IMR-90 (cell line): ENCODE measurements at regions of chr20 and their contacts with region 1.

Region 1: DNA sequence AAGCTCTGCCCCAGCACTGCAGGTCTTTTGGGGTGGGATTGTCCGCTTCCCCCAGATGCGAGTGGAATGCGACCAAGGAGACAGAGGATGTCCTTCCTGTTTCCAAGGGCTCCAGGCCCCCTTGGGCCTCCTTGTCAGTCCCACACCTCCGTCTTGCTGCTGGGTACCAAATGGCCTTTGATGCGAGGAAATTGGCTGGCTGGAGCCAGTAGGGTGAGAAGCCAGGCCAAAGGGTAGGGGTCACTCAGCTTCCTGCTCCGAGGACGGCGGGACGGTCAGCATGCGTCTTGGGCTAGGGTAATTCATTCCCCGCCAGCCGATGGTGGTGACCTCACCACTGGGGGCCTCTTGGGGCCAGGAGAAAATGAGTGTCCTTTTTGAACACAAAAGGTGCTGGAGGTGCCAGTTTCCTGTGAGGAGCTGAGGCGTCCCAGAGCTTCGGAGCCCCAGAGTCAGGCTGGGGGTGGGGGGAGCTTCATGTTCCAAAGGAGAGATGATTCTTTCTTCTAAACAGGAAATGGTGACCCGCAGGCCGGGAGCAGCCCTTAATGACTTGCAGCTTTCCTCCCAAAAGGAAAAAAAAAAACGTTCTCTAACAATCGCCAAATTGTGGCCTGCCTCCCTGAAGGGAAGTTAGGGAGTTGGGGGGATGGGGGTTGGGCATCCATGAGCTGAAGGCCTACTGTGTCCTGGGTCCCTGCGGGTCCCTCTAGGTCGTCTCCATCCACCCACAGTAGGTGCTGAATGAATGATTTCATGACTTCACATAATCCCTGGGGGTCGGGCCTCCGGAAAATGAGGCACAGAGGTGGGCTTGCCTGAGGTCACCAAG is 6.7 kb downstream of the SNAI1 start:
- DNase-seq: peak; percentile 87
- ATAC-seq: peak; percentile 75
- H3K4me3 ChIP-seq: no peak overlapping the region
- H3K27ac ChIP-seq: peak overlapping the region; percentile 95
- H3K4me1 ChIP-seq: peaks cover 43% of the 10 kb centered on the region
- H3K27me3 ChIP-seq: no peaks in the 10 kb centered on the region
- CTCF ChIP-seq: no peak
- POLR2A ChIP-seq: peak; percentile 60
- RAD21 ChIP-seq: no peak

Region 2: GRCh38 chr20:49832632-49833327 is 156.7 kb before region 1 on chr20:
- CTCF ChIA-PET with region 1: no interaction called
- POLR2A ChIA-PET with region 1: no interaction called
- dilution Hi-C with region 1: no loop called
- in situ Hi-C with region 1: no loop called
- intact Hi-C with region 1: no loop called
- DNase-seq: peak; percentile 39
- ATAC-seq: peak; percentile 64
- H3K4me3 ChIP-seq: no peak overlapping the region
- H3K27ac ChIP-seq: peak overlapping the region; percentile 71; the same call in 1 of the 2 replicates
- H3K4me1 ChIP-seq: peaks cover 6% of the 10 kb centered on the region; the same call in 1 of the 2 replicates
- H3K27me3 ChIP-seq: no peaks in the 10 kb centered on the region
- CTCF ChIP-seq: no peak
- POLR2A ChIP-seq: no peak
- RAD21 ChIP-seq: no peak

Region 3: GRCh38 chr20:49865559-49865958 is 123.9 kb before region 1 on chr20:
- CTCF ChIA-PET with region 1: no interaction called
- POLR2A ChIA-PET with region 1: no interaction called
- dilution Hi-C with region 1: no loop called
- in situ Hi-C with region 1: no loop called
- intact Hi-C with region 1: no loop called
- DNase-seq: peak; percentile 24
- ATAC-seq: no peak
- H3K4me3 ChIP-seq: no peak overlapping the region
- H3K27ac ChIP-seq: no peak overlapping the region
- H3K4me1 ChIP-seq: peaks cover 2% of the 10 kb centered on the region; the same call in 1 of the 2 replicates
- H3K27me3 ChIP-seq: no peaks in the 10 kb centered on the region
- CTCF ChIP-seq: no peak
- POLR2A ChIP-seq: no peak
- RAD21 ChIP-seq: no peak

Region 4: DNA sequence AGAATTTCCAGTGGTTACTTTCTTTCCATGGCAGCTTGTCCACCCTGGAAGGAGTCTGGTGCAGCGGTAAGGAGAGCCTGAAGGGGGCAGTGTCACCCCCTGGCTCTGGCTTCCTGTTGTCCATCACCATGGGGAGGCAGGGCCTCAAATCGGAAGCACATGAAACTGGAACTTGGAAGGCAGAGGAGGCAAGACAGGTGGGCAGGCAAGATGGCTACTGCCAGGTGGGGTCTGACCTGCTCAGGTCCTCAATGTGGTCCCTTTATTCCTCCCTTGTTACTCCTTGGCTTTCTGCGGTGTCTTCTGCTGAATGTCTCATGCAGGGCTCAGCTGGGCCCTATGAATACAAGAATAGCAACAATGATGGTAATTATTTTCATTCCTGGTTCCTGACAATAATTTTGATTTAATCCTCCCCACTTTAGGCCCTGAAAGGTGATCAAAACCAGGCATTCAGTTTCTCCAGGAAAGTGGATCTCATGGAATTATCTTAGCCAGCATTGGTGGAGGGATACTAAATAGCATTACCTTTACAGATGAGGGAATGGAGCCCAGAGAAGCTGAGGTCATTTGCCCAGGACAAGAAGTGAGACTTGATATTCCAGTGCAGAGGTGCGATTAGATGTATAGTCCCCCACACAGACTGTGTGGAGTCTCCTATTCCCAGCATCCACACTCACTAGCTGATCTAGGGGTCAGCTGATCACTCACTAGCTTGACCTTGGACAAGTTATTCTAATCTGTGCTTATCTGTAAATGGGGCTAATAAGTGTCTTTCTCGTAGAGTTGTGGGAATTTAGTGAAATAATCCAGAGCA is 24.3 kb before region 1 on chr20:
- CTCF ChIA-PET with region 1: no interaction called
- POLR2A ChIA-PET with region 1: no interaction called
- dilution Hi-C with region 1: no loop called
- in situ Hi-C with region 1: no loop called
- intact Hi-C with region 1: no loop called
- DNase-seq: no peak
- ATAC-seq: peak; percentile 36; the same call in 1 of the 2 replicates
- H3K4me3 ChIP-seq: no peak overlapping the region
- H3K27ac ChIP-seq: no peak overlapping the region
- H3K4me1 ChIP-seq: peaks cover 2% of the 10 kb centered on the region; the same call in 1 of the 2 replicates
- H3K27me3 ChIP-seq: no peaks in the 10 kb centered on the region
- CTCF ChIP-seq: peak; percentile 48
- POLR2A ChIP-seq: no peak
- RAD21 ChIP-seq: peak; percentile 30

Region 5: DNA sequence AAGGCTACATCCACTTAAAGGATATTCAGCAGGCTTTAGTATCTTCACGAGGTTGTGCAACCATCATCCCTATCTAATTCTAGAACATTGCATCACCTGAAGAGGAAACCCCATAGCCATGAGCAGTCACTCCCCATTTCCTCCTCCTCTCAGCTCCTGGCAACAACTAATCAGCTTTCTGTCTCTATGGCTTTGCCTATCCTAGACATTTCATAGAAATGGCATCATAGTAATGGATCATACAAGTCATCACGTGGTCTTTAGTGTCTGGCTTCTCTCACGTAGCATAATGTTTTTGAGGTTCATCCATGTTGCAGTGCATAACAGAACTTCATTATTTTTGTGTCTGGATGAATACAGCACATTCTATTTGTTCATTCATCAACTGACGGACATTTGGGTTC is 13.8 kb after region 1 on chr20:
- CTCF ChIA-PET with region 1: no interaction called
- POLR2A ChIA-PET with region 1: interaction called, 10 read pairs
- dilution Hi-C with region 1: no loop called
- in situ Hi-C with region 1: no loop called
- intact Hi-C with region 1: no loop called
- DNase-seq: peak; percentile 95
- ATAC-seq: peak; percentile 81
- H3K4me3 ChIP-seq: no peak overlapping the region
- H3K27ac ChIP-seq: no peak overlapping the region
- H3K4me1 ChIP-seq: no peaks in the 10 kb centered on the region
- H3K27me3 ChIP-seq: no peaks in the 10 kb centered on the region
- CTCF ChIP-seq: no peak
- POLR2A ChIP-seq: no peak
- RAD21 ChIP-seq: no peak